Mammary epithelial cell (primary cell): ENCODE measurements at regions of chr21 and their contacts with region 1.

Region 1: GRCh38 chr21:29024474-29025327 is at the start of gene USP16:
- DNase-seq: peak; percentile 100
- H3K4me3 ChIP-seq: peak within 1 kb of the TSS; percentile 70 to 98 (median 93)
- H3K27ac ChIP-seq: peak within 1 kb of the TSS; percentile 97
- H3K4me1 ChIP-seq: peaks cover 7% of the 10 kb centered on the region
- H3K27me3 ChIP-seq: no peaks in the 10 kb centered on the region
- CTCF ChIP-seq: no peak
- total RNA-seq, gene USP16: 17.3 to 28.1 TPM

Region 2: DNA sequence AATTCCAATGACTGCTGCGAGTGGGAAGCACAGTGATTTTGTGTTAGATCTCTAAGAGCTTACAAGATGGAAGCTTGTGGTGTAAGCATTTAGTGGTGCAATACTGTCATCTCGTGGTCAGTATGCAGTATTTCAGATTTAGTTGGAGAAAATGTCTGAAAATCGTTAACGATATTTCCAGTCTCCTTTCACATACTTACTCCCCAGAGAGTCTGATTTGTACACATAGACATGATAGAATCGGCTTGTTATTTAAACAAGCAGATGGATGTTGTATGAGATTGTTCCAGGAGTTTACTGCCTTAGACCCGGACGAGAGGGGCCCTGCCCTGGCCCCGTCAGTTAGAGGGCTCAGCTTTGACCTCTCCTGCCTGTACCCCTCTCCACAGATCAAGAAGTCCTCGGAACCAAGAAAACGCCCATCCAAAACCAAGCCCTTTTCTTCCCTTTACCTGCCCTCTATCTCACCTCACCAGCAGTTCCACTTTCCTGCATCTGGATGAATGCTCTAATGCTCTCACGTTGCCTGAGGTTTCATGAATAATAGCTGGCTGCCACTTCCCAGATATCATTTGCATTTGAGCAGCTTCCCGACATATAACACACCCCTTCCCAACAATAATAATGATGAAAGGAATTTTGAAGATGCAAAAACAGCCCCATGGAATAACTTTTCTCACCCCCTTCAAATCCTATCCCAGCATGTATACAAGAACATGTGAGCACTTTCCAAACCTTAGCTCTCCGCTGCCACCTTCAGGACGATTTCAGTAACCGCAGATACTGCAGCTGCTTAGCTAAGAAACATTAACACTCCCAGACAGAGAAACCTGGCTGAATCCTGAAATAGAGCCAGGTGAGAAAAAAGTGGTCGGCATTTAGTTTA is 279.3 kb before region 1 on chr21:
- CTCF ChIA-PET with region 1: no interaction called
- dilution Hi-C with region 1: no loop called
- in situ Hi-C with region 1: no loop called
- intact Hi-C with region 1: no loop called
- DNase-seq: peak; percentile 65
- H3K4me3 ChIP-seq: peak overlapping the region; percentile 21 to 52 (median 47)
- H3K27ac ChIP-seq: peak overlapping the region; percentile 21
- H3K4me1 ChIP-seq: no peaks in the 10 kb centered on the region
- H3K27me3 ChIP-seq: no peaks in the 10 kb centered on the region
- CTCF ChIP-seq: peak; percentile 97 to 98

Region 3: DNA sequence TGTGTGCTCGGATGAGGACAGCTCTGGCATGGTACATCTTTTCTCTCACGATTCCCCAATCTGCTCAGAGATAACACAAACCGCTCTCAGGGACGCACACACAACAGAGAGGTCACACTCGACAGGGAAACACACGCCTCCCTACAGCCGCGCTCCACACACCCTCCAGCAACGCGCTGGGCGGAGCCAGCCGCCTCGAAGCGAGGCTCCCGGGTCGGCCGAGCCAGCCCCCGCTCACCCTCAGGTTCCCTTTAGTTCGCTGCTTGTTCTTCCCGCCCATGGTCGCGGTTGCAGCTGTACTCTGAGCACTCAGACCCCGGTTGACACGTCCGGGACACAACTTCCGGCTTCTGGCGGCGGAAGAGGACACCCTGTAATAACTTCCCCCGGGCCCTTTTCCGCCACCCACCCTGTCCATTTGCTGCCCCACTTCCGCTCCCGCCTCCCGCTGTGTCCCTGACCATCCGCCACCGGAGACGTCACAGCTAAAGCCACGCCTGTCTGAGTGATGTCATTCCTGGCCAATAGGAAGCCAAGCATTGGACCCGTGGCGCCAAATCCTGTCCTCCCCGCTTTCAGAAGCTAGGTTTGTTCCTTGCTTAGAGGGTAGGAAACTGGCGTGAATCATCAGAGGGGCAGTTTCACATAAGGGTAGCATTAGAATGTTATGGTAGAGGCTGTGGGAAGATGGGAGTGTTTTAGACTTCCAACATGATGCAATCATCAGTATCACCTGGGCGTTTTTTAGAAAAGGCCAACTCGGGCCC is 32.0 kb before region 1 on chr21 and contains the start of gene LTN1:
- CTCF ChIA-PET with region 1: no interaction called
- dilution Hi-C with region 1: no loop called
- in situ Hi-C with region 1: no loop called
- intact Hi-C with region 1: loop called (anchors 1 kb)
- DNase-seq: peak; percentile 100
- H3K4me3 ChIP-seq: peak within 1 kb of the TSS; percentile 73 to 91 (median 86)
- H3K27ac ChIP-seq: peak within 1 kb of the TSS; percentile 95
- H3K4me1 ChIP-seq: peaks cover 18% of the 10 kb centered on the region
- H3K27me3 ChIP-seq: no peaks in the 10 kb centered on the region
- CTCF ChIP-seq: no peak
- total RNA-seq, gene LTN1: 27.0 to 34.2 TPM

Region 4: DNA sequence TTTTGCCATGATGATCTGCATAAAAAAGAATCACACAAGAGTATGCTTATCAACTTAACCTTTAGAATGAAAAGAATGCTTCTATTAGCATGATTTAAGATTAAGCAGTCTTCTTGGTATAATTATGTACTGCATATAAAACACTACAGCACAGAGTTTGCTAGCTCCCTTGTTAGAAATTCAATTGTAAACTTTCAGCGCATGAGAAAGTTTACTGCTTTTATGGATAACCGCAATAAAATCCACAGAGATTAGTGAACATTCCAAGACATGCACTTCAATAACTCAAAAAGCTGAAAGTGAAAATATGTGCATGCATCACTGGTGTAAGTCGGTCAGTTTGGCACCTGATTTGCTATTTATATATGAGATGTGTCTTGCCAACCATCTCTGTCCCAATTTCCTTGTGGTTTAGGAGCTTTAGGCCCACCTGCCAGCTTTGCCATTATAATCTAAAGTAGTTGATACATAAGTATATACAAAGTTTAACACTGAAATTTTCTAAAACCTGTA is 31.9 kb after region 1 on chr21:
- CTCF ChIA-PET with region 1: interaction called, 16 read pairs
- dilution Hi-C with region 1: no loop called
- in situ Hi-C with region 1: no loop called
- intact Hi-C with region 1: no loop called
- DNase-seq: no peak
- H3K4me3 ChIP-seq: no peak overlapping the region
- H3K27ac ChIP-seq: no peak overlapping the region
- H3K4me1 ChIP-seq: no peaks in the 10 kb centered on the region
- H3K27me3 ChIP-seq: no peaks in the 10 kb centered on the region
- CTCF ChIP-seq: no peak

Region 5: DNA sequence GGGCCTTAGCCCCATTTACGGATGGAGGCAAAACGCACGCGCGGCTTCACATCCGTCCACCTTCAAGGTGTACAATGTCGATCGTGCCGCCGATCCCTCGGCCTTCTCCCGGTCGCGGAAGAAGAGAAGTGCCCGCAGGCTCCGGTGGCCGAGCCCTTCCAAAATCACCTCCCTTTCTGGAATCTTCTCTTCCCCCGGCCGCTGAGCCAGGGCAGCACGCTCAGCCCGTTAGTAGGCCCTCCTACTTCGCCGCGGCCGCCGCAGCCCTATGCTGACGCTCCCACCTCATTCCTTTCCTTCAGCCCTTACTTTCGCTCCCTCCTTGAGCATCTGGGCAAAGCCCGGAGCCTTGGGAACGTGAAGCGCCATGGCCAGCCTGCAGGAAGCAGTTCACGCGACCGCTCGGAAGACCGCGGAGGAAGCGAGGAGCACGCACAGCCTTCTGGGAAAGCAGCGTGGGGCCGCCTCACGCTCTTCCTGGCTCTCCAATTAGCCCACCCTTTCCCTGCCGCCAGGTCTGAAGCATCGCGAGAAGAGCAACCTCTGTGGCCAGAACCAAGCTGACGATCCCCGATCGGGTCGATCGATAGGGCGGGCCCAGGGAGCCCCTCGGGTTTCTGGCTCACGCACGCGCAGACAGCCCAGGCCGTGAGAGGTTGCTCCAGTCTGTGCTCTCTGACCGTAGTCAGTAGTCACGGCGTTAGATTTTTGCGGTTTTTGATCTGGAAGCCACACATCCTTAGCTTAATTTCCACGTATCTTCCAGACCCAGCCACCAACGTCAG is 48.7 kb after region 1 on chr21 and contains the start of gene CCT8:
- CTCF ChIA-PET with region 1: interaction called, 5 read pairs
- dilution Hi-C with region 1: no loop called
- in situ Hi-C with region 1: no loop called
- intact Hi-C with region 1: loop called (anchors 5 kb)
- DNase-seq: peak; percentile 99
- H3K4me3 ChIP-seq: peak within 1 kb of the TSS; percentile 75 to 91 (median 88)
- H3K27ac ChIP-seq: peak within 1 kb of the TSS; percentile 87
- H3K4me1 ChIP-seq: peaks cover 24% of the 10 kb centered on the region
- H3K27me3 ChIP-seq: no peaks in the 10 kb centered on the region
- CTCF ChIP-seq: no peak
- total RNA-seq, gene CCT8: 124 to 195 TPM

Region 6: DNA sequence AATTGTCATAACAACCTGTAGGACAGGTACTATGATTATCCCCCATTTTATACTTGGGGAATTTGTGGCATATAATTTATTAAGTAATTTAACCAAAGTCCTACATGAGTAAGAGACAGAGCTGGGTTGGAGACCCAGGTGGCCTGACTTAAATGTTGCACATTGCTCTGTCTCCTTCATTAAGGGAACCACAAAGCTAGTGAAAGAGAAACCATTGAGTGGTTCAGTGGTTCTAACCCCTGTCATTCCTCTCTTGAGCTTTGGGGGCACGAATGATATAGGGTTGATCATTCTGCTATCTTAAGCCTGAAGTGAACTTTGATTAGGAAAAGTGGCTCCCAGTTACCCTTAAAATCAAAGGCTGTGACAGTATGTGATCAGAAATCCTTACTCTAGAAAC is 100.5 kb after region 1 on chr21:
- CTCF ChIA-PET with region 1: no interaction called
- dilution Hi-C with region 1: no loop called
- in situ Hi-C with region 1: no loop called
- intact Hi-C with region 1: no loop called
- DNase-seq: no peak
- H3K4me3 ChIP-seq: no peak overlapping the region
- H3K27ac ChIP-seq: no peak overlapping the region
- H3K4me1 ChIP-seq: peaks cover 4% of the 10 kb centered on the region
- H3K27me3 ChIP-seq: no peaks in the 10 kb centered on the region
- CTCF ChIP-seq: no peak

Region 7: GRCh38 chr21:29332461-29333362 is 308.0 kb after region 1 on chr21:
- CTCF ChIA-PET with region 1: no interaction called
- dilution Hi-C with region 1: no loop called
- in situ Hi-C with region 1: no loop called
- intact Hi-C with region 1: no loop called
- DNase-seq: peak; percentile 34
- H3K4me3 ChIP-seq: no peak overlapping the region
- H3K27ac ChIP-seq: peak overlapping the region; percentile 9
- H3K4me1 ChIP-seq: peaks cover 25% of the 10 kb centered on the region
- H3K27me3 ChIP-seq: no peaks in the 10 kb centered on the region
- CTCF ChIP-seq: no peak